Motor neuron (in vitro differentiated cells): ENCODE measurements at regions of chr11 and their contacts with region 1.

Region 1: DNA sequence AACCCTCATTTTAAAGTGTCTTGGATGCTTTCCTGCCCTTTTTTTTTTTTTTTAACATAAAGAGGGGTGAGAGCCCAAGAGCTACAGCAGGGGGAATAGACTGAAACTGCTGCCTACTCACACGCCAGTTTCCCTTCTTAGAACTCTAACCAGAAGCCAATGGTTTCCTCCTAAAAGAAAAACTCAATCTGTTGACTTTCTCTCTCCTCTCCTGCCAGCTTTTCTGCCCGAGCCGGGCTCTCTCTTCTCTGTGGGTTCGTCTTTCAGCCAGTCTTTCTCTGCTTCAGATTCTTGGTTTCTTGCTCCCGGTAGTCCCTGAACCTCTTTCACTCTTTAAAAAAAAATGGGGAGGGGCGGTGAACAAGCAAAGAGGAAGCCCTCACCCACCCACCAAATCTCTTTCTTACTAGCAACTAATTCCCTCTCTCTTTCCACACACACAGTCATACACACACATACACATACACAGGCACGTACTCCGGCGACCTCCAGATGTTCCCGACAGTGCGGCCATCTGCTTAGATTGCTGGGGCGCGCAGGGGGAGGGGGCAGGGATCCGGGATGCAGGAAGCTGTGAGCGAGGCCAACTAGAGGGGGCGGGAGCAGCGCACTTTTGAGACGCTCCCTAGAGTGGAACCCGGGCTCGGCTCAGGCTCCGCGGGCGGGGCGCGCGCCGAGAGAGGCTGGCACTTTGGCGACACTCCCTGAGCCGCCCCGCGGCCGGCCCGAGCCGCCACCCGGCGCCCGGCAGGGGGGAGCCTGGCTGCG is 446 bp upstream of the TSKU start:
- ATAC-seq: peak; percentile 59 to 82 (median 74)
- H3K4me3 ChIP-seq: peak overlapping the region; percentile 70 to 92 (median 81)
- H3K27ac ChIP-seq: peak overlapping the region; percentile 93
- H3K4me1 ChIP-seq: peaks cover 44 to 45% of the 10 kb centered on the region in 2 donors

Region 2: GRCh38 chr11:75802913-75803820 is 979.5 kb before region 1 on chr11:
- in situ Hi-C with region 1: no loop called
- ATAC-seq: peak; percentile 78 to 98 (median 92)
- H3K4me3 ChIP-seq: no peak overlapping the region
- H3K27ac ChIP-seq: no peak overlapping the region
- H3K4me1 ChIP-seq: no peaks in the 10 kb centered on the region

Region 3: DNA sequence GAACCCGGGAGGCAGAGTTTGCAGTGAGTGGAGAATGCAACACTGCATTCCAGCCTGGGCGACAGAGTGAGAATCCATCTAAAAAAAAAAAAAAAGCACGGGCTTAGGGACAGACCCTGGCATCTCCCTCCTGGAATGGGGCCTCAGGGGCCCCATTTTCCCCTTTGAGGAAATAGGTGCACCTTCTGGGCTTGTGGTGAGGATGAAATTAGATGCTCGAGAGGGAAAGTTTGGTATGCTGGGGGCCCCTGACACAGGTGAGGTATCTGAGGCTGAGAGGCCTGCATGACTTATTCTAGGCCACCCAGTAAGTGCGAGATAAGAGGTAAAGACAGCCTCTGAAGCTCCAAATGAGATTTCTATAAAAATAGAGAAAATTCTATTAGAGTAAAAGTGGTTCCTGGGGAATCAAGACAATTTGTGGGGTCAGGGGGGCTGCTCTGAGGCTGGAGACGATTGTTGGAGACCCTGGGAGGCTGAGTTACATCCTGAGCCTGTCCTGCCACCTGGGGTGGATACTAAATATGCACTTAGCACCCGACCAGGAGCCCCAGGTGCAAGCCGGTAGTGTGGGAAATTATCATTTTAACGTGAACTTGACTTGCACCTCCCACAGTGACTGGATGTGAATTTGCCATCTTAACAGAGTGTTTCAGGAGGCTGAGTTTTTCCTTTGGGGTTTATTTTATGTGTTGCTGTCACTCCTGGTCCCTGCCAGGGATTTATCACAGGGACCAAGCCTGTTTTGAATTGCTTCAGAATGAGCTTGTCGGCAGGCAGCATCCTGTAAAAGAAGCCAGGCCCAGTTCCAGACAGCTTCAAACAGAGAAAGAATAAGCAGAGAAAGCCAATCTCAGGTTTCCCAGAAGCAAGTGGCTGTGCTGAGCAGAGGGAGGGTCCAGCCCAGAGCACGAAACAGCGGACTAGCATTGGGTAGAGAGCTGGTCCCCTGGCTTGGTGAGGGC is 48.0 kb before region 1 on chr11:
- in situ Hi-C with region 1: loop called in 1 of 9 experiments (anchors 10 kb)
- ATAC-seq: peak in 5 of 8 experiments; percentile 22 to 62 (median 44)
- H3K4me3 ChIP-seq: no peak overlapping the region
- H3K27ac ChIP-seq: no peak overlapping the region
- H3K4me1 ChIP-seq: peaks cover 15 to 19% of the 10 kb centered on the region in 2 donors

Region 4: DNA sequence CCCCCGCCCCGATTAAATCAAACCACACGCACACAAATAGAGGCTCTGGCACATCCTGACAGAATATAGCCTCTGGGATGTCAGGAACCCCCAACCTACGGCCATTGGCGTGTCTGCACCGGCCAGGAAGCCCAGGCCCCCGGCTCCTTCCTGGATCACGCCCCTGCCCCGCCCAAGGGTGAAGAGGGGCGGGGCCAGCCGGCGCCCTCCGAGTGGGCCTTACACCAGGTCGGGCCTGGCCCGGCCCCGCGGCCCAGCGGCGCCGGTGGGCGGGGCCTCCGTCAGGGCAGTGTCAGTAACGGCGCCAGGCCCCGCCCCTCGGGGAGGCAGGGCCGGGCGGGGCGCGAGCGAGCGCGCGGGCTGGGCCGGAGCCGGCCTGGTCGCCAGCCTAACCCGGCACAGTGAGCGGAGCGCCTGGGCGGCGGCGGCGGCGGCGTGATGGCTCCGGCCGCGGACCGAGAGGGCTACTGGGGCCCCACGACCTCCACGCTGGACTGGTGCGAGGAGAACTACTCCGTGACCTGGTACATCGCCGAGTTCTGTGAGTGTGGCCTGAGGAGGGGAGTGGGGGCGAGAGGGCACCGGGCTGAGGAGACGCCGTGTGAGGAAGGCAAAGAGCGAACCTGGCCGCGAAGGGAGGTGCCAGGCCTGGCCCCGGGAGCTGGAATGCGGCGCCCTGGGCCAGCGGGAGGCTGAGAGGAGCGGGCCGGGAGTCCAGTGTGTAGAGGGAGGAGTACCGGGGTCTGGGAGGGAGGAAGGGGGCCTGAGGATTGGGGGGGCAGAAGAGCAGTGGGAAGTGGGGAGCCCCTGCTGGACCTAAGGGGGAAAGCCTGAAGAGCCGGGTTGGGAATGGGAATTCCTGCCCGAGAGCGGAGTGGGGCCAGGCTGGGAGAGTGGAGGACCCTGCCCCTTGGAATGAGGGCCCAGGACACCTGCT is 78.1 kb after region 1 on chr11 and contains the start of gene ACER3:
- in situ Hi-C with region 1: no loop called
- ATAC-seq: peak; percentile 93 to 98 (median 95)
- H3K4me3 ChIP-seq: peak within 1 kb of the TSS; percentile 54 to 71 (median 61)
- H3K27ac ChIP-seq: peak within 1 kb of the TSS; percentile 59 to 61
- H3K4me1 ChIP-seq: peaks cover 10 to 14% of the 10 kb centered on the region in 2 donors
- total RNA-seq, gene ACER3: 7.1 to 15.8 (median 9.2) TPM

Region 5: GRCh38 chr11:76872959-76873827 is 90.5 kb after region 1 on chr11:
- in situ Hi-C with region 1: no loop called
- ATAC-seq: no peak
- H3K4me3 ChIP-seq: no peak overlapping the region
- H3K27ac ChIP-seq: no peak overlapping the region
- H3K4me1 ChIP-seq: no peaks in the 10 kb centered on the region